Naive thymus-derived CD4-positive, alpha-beta T cell (primary cell): ENCODE measurements at regions of chr5 and their contacts with region 1.

Region 1: DNA sequence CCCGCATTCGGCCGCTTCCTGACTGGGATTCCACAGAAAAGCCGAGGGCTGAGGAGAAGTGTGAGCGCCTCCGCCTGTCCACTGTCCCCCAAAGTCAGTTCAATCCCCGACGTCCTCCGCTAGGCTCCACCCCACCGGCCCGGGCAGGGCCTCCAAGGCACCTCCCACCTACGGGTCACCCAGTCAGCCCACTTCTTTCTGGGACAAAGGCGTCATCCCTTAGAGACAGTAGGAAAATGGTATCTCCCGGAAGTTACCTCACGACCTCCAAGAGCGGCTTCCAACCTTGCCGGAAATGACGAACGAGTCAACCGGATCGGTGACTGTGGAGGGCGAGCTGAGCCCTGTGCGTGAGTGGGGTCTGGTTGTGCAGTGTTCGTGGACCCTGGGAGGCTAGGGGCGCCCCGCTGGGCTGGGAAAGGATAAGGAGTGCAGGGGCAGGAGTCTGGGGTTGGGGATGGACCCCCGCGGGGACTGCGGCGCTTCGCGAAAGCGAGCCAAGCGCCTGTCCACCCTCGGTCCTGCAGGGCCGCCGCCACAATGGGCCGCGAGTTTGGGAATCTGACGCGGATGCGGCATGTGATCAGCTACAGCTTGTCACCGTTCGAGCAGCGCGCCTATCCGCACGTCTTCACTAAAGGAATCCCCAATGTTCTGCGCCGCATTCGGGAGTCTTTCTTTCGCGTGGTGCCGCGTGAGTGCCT is at the starts of genes GDF9 and UQCRQ:
- DNase-seq: peak; percentile 72 to 97 (median 93)
- ATAC-seq: peak; percentile 99
- H3K4me3 ChIP-seq: peak within 1 kb of the TSS; percentile 98
- H3K4me3 Mint-ChIP-seq: peak within 1 kb of the TSS; percentile 98 to 100 (median 100)
- H3K27ac ChIP-seq: peak within 1 kb of the TSS; percentile 96
- H3K27ac Mint-ChIP-seq: peak within 1 kb of the TSS; percentile 97 to 100 (median 100)
- H3K4me1 ChIP-seq: peaks cover 7 to 12% of the 10 kb centered on the region in 2 donors
- H3K4me1 Mint-ChIP-seq: peaks cover 11 to 36% (median 27%) of the 10 kb centered on the region in 7 donors
- H3K27me3 ChIP-seq: no peaks in the 10 kb centered on the region
- H3K27me3 Mint-ChIP-seq: peaks cover 0 to 8% (median 0%) of the 10 kb centered on the region in 5 donors
- total RNA-seq, gene GDF9: 0.48 to 2.0 (median 1.6) TPM
- total RNA-seq, gene UQCRQ: 101 to 338 (median 110) TPM

Region 2: GRCh38 chr5:132293066-132293991 is 573.2 kb before region 1 on chr5:
- CTCF ChIA-PET with region 1: no interaction called
- POLR2A ChIA-PET with region 1: no interaction called
- intact Hi-C with region 1: loop called in 1 of 2 experiments (anchors 1 kb)
- DNase-seq: peak; percentile 8 to 79 (median 35)
- ATAC-seq: peak; percentile 54
- H3K4me3 ChIP-seq: peak overlapping the region; percentile 69
- H3K4me3 Mint-ChIP-seq: peak overlapping the region; percentile 80 to 95 (median 90)
- H3K27ac ChIP-seq: peak overlapping the region; percentile 43
- H3K27ac Mint-ChIP-seq: peak overlapping the region in 3 of 9 donors; percentile 36 to 75 (median 43)
- H3K4me1 ChIP-seq: peaks cover 0 to 8% of the 10 kb centered on the region in 2 donors
- H3K4me1 Mint-ChIP-seq: peaks cover 5 to 26% (median 9%) of the 10 kb centered on the region in 7 donors
- H3K27me3 ChIP-seq: no peaks in the 10 kb centered on the region
- H3K27me3 Mint-ChIP-seq: peaks cover 9 to 32% (median 19%) of the 10 kb centered on the region in 5 donors

Region 3: DNA sequence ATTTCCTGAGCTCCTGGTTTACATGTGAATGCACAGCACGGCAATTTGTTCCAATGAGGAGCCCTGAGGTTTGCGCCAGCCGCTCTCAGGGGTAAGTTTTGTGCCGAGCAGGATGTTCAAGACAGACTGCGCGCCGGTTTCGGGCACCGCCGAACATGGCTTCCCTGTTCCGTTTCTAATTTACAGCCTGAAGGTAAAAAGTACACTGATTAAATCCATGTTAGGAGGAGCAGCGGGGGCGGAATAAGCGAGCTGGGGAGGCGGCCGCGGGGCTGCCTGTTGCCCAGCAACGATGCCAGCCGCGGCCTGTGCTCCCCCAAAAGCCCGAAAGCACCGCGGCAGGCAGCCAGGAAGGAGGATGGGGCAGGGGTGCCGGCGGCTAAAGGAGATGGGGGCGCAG is 47.0 kb before region 1 on chr5:
- CTCF ChIA-PET with region 1: no interaction called
- POLR2A ChIA-PET with region 1: no interaction called
- intact Hi-C with region 1: no loop called
- DNase-seq: peak in 1 of 9 donors; percentile 21
- ATAC-seq: no peak
- H3K4me3 ChIP-seq: peak overlapping the region; percentile 34
- H3K4me3 Mint-ChIP-seq: peak overlapping the region; percentile 19 to 86 (median 81)
- H3K27ac ChIP-seq: no peak overlapping the region
- H3K27ac Mint-ChIP-seq: peak overlapping the region in 5 of 9 donors; percentile 18 to 77 (median 51)
- H3K4me1 ChIP-seq: peaks cover 0 to 6% of the 10 kb centered on the region in 2 donors
- H3K4me1 Mint-ChIP-seq: peaks cover 6 to 18% (median 12%) of the 10 kb centered on the region in 7 donors
- H3K27me3 ChIP-seq: peaks cover 0 to 6% of the 10 kb centered on the region in 2 donors
- H3K27me3 Mint-ChIP-seq: peaks cover 13 to 48% (median 22%) of the 10 kb centered on the region in 5 donors

Region 4: DNA sequence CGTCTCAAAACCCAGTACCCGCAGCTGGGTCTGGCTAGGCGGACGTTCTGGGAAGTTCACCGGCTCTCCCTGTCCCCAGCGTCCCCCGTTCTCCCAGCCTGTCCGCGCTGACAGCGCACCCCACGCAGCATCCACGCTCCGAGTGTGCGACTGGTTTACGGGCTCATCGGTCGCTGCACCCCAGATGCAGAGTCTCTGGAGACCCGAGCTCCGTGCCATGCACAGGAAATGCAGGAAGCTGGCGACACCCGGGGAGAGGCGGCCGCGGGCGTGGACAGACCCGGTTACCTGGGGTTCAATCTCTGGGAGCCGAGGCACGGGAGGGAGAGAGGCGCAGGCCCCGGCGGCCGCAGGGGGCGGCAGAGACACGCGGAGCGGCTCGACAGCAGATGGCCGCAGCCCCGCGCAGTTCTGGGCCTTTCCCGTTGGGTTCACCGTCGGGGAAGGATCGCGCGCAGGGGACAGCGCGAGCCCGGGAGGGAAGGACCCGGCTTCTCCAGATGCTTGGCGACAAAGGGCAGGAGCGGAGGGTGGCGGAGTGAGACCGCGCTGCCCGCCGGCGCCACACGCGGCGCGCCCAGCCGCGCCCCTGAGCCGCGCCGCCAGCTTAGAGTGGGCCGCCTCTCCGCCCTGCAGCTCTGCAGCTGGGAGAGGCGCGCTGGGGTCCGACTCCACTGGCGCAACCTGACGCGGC is 36.6 kb before region 1 on chr5:
- CTCF ChIA-PET with region 1: interaction called, 3 read pairs
- POLR2A ChIA-PET with region 1: no interaction called
- intact Hi-C with region 1: loop called (anchors 2 to 5 kb)
- DNase-seq: peak; percentile 43 to 78 (median 65)
- ATAC-seq: peak; percentile 93
- H3K4me3 ChIP-seq: peak overlapping the region; percentile 65
- H3K4me3 Mint-ChIP-seq: peak overlapping the region; percentile 79 to 93 (median 88)
- H3K27ac ChIP-seq: no peak overlapping the region
- H3K27ac Mint-ChIP-seq: peak overlapping the region in 3 of 9 donors; percentile 49 to 67 (median 52)
- H3K4me1 ChIP-seq: no peaks in the 10 kb centered on the region
- H3K4me1 Mint-ChIP-seq: peaks cover 0 to 19% (median 12%) of the 10 kb centered on the region in 7 donors
- H3K27me3 ChIP-seq: peaks cover 2 to 12% of the 10 kb centered on the region in 2 donors
- H3K27me3 Mint-ChIP-seq: peaks cover 35 to 62% (median 42%) of the 10 kb centered on the region in 5 donors

Region 5: GRCh38 chr5:133025804-133026663 is 159.5 kb after region 1 on chr5 and contains the start of gene ZCCHC10:
- CTCF ChIA-PET with region 1: no interaction called
- POLR2A ChIA-PET with region 1: no interaction called
- intact Hi-C with region 1: loop called (anchors 1 kb)
- DNase-seq: peak; percentile 75 to 90 (median 84)
- ATAC-seq: peak; percentile 100
- H3K4me3 ChIP-seq: peak within 1 kb of the TSS; percentile 99
- H3K4me3 Mint-ChIP-seq: peak within 1 kb of the TSS; percentile 92 to 98 (median 94)
- H3K27ac ChIP-seq: peak within 1 kb of the TSS; percentile 96
- H3K27ac Mint-ChIP-seq: peak within 1 kb of the TSS; percentile 85 to 98 (median 94)
- H3K4me1 ChIP-seq: peaks cover 4% of the 10 kb centered on the region in 2 donors
- H3K4me1 Mint-ChIP-seq: peaks cover 14 to 37% (median 26%) of the 10 kb centered on the region in 7 donors
- H3K27me3 ChIP-seq: no peaks in the 10 kb centered on the region
- H3K27me3 Mint-ChIP-seq: peaks cover 0 to 8% (median 0%) of the 10 kb centered on the region in 5 donors
- total RNA-seq, gene ZCCHC10: 16.0 to 32.9 (median 18.2) TPM

Region 6: DNA sequence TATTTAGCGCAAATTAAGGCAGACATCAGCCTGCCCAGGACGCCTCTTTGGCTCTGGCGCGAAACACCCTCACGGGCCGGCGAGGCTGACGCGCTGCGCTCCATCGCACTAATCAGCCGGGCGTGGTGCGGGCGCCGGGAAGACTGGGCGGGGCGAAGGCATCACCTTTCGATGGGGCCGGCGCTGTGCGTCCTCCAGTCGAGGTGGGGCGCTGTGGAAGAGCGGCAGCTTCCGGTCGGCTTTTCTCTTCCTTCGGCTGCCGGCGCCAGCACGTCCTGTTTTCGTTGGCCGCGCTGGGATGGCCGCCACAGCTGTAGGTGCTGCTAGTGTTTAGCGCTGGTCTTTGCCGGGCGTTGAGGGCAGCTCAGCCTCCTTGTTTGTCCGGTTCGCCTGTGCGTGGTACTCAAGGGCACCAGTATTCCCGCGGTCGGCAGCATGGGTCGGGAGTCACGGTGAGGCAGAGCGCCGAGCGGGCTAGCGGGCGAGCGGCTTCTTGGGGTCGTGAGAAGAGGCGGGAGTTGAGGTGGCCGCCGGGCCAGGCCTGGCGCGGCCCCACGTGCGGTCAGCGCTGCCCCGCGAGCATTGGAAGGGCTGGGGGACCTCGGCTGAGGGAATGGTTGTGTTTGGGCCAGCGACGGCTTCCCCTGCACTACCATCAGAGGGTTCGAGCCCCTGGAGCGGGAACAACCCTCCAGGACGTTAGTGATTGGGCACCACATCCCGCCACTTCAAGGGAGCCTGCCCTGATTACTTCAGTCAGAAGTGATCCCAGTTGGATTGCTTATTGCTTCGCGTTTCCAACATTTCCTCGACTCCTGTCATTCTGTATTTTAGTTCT is 1892.2 kb after region 1 on chr5 and contains the start of gene DDX46:
- CTCF ChIA-PET with region 1: no interaction called
- POLR2A ChIA-PET with region 1: no interaction called
- intact Hi-C with region 1: loop called in 1 of 2 experiments (anchors 2 kb)
- DNase-seq: peak; percentile 85 to 95 (median 91)
- ATAC-seq: peak; percentile 99
- H3K4me3 ChIP-seq: peak within 1 kb of the TSS; percentile 75
- H3K4me3 Mint-ChIP-seq: peak within 1 kb of the TSS; percentile 92 to 100 (median 99)
- H3K27ac ChIP-seq: peak within 1 kb of the TSS; percentile 87
- H3K27ac Mint-ChIP-seq: peak within 1 kb of the TSS; percentile 93 to 99 (median 97)
- H3K4me1 ChIP-seq: peaks cover 12 to 13% of the 10 kb centered on the region in 2 donors
- H3K4me1 Mint-ChIP-seq: peaks cover 20 to 47% (median 38%) of the 10 kb centered on the region in 7 donors
- H3K27me3 ChIP-seq: no peaks in the 10 kb centered on the region
- H3K27me3 Mint-ChIP-seq: no peaks in the 10 kb centered on the region
- total RNA-seq, gene DDX46: 51.2 to 72.5 (median 64.2) TPM